ENCODE measurements at regions of chr5 and their contacts with region 1.

Region 1: GRCh38 chr5:18932081-18932480 is 1055.9 kb downstream of the CDH18 start:
- DNase-seq: no peak
- ATAC-seq: no peak
- H3K4me3 ChIP-seq: no peak overlapping the region
- H3K4me3 Mint-ChIP-seq: no peak overlapping the region
- H3K27ac ChIP-seq: no peak overlapping the region
- H3K27ac Mint-ChIP-seq: no peak overlapping the region
- H3K4me1 ChIP-seq: no peaks in the 10 kb centered on the region
- H3K4me1 Mint-ChIP-seq: no peaks in the 10 kb centered on the region
- H3K27me3 ChIP-seq: no peaks in the 10 kb centered on the region
- H3K27me3 Mint-ChIP-seq: no peaks in the 10 kb centered on the region
- CTCF ChIP-seq: no peak

Region 2: DNA sequence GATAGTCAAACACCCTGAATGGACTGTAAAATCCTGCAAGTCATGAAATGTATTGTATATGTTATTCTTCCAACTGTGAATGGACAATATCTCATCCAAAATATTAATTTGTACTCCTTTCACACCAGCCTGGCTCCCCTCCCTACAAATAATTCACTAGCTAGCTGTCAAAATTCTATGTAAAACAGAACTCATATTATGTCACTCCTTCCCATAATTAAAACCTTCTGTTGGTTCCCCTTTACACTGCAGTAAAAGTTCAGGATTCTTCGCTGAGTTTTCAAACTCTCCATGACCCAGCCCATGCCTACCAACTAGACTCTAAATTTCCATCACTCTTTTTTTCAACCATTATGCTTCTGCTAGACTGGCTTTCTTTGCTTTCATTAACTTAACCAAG is 440.7 kb before region 1 on chr5:
- CTCF ChIA-PET with region 1: no interaction called
- POLR2A ChIA-PET with region 1: no interaction called
- intact Hi-C with region 1: loop called in 1 of 2 experiments (anchors 5 kb)
- DNase-seq: no peak
- ATAC-seq: no peak
- H3K4me3 ChIP-seq: no peak overlapping the region
- H3K4me3 Mint-ChIP-seq: no peak overlapping the region
- H3K27ac ChIP-seq: no peak overlapping the region
- H3K27ac Mint-ChIP-seq: no peak overlapping the region
- H3K4me1 ChIP-seq: no peaks in the 10 kb centered on the region
- H3K4me1 Mint-ChIP-seq: no peaks in the 10 kb centered on the region
- H3K27me3 ChIP-seq: no peaks in the 10 kb centered on the region
- H3K27me3 Mint-ChIP-seq: no peaks in the 10 kb centered on the region
- CTCF ChIP-seq: no peak